ENCODE measurements at regions of chr2 and their contacts with region 1.

Region 1: DNA sequence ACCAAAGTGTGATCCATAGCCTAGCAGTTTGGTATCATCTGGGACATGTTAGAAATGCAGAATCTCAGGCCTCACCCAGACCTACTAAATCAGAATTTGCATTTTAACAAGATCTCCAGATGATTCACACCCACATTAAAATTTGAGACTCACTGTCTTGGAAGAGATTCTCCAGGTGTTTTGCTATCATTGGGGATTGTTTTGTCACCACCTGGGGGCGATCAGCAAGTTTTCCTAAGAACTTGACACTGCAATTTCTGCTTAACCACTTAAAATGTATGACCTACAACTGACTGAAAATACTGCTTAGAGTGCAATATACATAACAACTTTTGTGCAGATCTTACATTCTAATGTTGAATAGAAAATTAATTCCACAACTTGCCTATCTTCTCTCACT is 18.9 kb upstream of the ITGA4 start:
- DNase-seq: no peak
- ATAC-seq: peak; percentile 58
- H3K4me3 ChIP-seq: no peak overlapping the region
- H3K27ac ChIP-seq: no peak overlapping the region
- H3K4me1 ChIP-seq: no peaks in the 10 kb centered on the region
- H3K27me3 ChIP-seq: no peaks in the 10 kb centered on the region
- CTCF ChIP-seq: peak; percentile 20 to 34 (median 24); a peak in 4 of 6 replicates
- EP300 ChIP-seq: no peak
- POLR2A ChIP-seq: no peak
- RAD21 ChIP-seq: 0 out of 2 replicates have a peak, but pooled peaks have one; percentile 22

Region 2: DNA sequence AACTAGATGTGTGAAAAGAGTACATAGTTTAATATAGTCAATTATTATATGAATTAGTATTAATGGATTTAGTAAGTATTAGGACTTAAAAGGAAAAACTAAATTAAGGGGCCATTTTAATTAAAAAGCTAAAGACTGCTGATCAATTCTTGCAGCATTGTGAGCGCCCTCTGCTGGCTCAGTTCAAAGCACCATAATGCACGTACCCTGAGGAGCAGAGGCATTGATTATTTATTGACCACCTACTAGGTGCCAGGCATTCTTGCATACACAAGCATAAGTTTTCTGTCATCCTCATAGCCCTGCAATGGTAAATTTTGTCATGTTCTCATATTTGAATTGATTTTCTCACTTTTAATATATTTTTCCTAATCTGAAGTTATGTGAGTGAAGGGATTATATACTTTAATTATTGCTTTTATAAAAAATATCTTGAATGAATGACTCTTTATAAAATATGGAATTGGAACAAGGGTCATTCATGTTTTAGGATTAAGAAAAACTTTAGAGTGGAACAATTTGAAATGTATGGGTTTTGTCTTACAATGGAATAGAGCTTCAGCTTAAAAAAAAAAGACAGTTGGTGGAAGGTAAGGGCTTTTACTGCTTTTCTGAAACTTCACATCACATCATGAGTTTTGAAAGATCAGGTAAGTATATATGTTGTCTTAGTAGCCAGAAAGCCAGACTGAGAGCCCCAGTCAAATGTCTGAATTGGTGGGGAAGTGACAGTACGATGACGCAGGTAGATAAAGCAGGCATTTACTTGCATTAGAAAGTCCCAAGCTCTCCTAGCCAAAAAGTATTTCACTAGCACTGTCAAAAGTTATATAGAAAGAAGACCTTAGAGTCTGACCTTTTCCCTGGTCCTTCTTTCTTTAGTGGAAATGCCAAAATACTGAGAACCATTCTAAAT is 28.7 kb after region 1 on chr2:
- CTCF ChIA-PET with region 1: interaction called, 10 read pairs
- POLR2A ChIA-PET with region 1: no interaction called
- RAD21 ChIA-PET with region 1: interaction called, 7 read pairs
- SMC1A ChIA-PET with region 1: interaction called, 5 read pairs
- in situ Hi-C with region 1: no loop called
- intact Hi-C with region 1: no loop called
- DNase-seq: no peak
- ATAC-seq: peak; percentile 66
- H3K4me3 ChIP-seq: no peak overlapping the region
- H3K27ac ChIP-seq: no peak overlapping the region
- H3K4me1 ChIP-seq: peaks cover 31% of the 10 kb centered on the region
- H3K27me3 ChIP-seq: no peaks in the 10 kb centered on the region
- CTCF ChIP-seq: peak; percentile 74 to 81 (median 79)
- EP300 ChIP-seq: no peak
- POLR2A ChIP-seq: no peak
- RAD21 ChIP-seq: peak; percentile 70

Region 3: DNA sequence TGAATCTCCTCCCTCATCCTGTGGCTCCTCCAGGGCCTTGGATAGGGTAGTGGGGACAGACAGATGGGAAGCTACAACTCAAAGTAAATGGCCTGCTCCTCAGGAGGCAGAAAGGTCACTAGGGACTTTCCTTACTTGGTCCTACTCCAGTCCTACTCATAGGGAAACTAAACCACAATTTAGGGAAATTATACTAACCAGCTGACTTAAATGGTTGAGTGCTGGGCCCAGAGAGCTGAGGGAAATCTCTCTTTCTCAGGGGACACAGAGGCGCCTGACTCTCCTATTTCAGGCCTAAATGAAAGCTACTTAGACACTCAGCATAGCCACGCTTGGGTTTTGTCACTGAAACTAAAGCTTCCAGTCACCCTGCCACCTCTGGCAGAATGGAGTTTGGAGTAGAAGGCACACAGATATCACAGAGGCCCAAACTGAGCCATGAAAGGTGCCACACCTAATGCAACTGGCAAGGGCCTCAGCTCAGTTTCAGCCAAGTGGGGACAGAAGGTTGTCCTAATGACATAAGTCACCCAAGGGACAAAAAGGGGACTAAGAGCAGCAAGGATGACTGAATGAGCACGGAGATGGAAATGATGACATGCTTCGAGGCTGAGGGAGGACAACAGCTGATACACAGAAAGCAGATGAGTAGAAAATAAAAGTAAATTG is 194.6 kb after region 1 on chr2:
- CTCF ChIA-PET with region 1: no interaction called
- POLR2A ChIA-PET with region 1: no interaction called
- RAD21 ChIA-PET with region 1: no interaction called
- SMC1A ChIA-PET with region 1: no interaction called
- in situ Hi-C with region 1: no loop called
- intact Hi-C with region 1: no loop called
- DNase-seq: peak; percentile 23
- ATAC-seq: peak; percentile 73
- H3K4me3 ChIP-seq: no peak overlapping the region
- H3K27ac ChIP-seq: no peak overlapping the region
- H3K4me1 ChIP-seq: no peaks in the 10 kb centered on the region; the same call in 1 of the 2 replicates
- H3K27me3 ChIP-seq: no peaks in the 10 kb centered on the region
- CTCF ChIP-seq: no peak
- EP300 ChIP-seq: no peak
- POLR2A ChIP-seq: no peak
- RAD21 ChIP-seq: no peak

Region 4: GRCh38 chr2:181850936-181851560 is 412.8 kb after region 1 on chr2:
- CTCF ChIA-PET with region 1: no interaction called
- POLR2A ChIA-PET with region 1: no interaction called
- RAD21 ChIA-PET with region 1: no interaction called
- SMC1A ChIA-PET with region 1: no interaction called
- in situ Hi-C with region 1: no loop called
- intact Hi-C with region 1: no loop called
- DNase-seq: no peak
- ATAC-seq: peak; percentile 48; the same call in 2 of the 3 replicates
- H3K4me3 ChIP-seq: no peak overlapping the region
- H3K27ac ChIP-seq: no peak overlapping the region
- H3K4me1 ChIP-seq: no peaks in the 10 kb centered on the region
- H3K27me3 ChIP-seq: no peaks in the 10 kb centered on the region
- CTCF ChIP-seq: no peak
- EP300 ChIP-seq: no peak
- POLR2A ChIP-seq: no peak
- RAD21 ChIP-seq: no peak